ENCODE measurements at regions of chr3 and their contacts with region 1.

Region 1: GRCh38 chr3:16247276-16248061 is 17.3 kb downstream of the DPH3 start:
- DNase-seq: peak in 4 of 5 donors; percentile 84 to 92 (median 88)
- H3K4me3 ChIP-seq: no peak overlapping the region
- H3K27ac ChIP-seq: no peak overlapping the region
- H3K4me1 ChIP-seq: peaks cover 0 to 4% (median 0%) of the 10 kb centered on the region in 3 donors
- H3K27me3 ChIP-seq: no peaks in the 10 kb centered on the region
- CTCF ChIP-seq: peak; percentile 96

Region 2: GRCh38 chr3:15815696-15816095 is 431.8 kb before region 1 on chr3:
- intact Hi-C with region 1: loop called (anchors 10 kb)
- DNase-seq: peak in 2 of 5 donors; percentile 69 to 81
- H3K4me3 ChIP-seq: no peak overlapping the region
- H3K27ac ChIP-seq: no peak overlapping the region
- H3K4me1 ChIP-seq: no peaks in the 10 kb centered on the region
- H3K27me3 ChIP-seq: no peaks in the 10 kb centered on the region
- CTCF ChIP-seq: peak; percentile 56

Region 3: DNA sequence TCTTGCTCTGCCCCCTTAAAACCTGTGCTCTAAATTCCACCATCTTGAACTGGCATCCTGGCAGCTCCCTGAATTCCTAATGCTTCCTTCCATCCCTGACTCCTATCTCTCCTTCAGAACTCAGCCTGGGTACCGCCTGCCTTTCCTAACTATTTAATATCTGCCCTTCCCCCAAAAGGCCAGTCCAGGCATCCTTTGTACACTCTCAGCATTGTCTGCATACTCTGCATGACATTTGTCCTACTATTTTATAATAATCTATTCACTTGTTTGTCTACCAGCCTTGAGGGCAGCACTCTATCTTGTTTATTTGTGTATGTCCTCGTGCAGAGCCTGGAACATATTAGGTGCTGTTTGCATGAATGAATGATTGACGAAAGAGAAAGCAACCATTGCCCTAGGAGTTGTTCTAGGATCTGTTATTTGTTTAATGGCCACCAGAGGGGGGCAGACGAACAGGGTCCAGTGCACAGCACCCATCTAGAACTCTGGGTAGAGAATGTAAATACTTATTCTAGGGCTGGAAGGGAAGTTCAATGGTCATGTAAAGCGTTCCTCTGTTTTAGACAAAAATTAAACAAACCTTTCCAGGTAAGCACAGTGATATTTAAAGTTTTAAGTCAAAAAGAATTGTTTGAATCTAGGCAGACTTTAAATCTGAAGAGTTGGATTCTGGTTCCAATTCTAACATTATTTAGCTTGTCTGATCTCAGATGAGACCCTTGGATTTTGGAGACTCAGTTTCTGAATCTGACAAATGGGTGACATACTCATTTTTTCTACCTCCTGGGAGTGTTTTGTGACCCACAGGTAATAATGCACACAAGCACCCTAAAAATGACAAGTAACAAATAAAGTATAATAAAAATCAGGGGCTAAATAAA is 198.8 kb before region 1 on chr3:
- intact Hi-C with region 1: loop called (anchors 10 kb)
- DNase-seq: peak in 3 of 5 donors; percentile 33 to 82 (median 60)
- H3K4me3 ChIP-seq: peak overlapping the region in 2 of 3 donors; percentile 42 to 59
- H3K27ac ChIP-seq: no peak overlapping the region
- H3K4me1 ChIP-seq: peaks cover 0 to 6% (median 0%) of the 10 kb centered on the region in 3 donors
- H3K27me3 ChIP-seq: no peaks in the 10 kb centered on the region
- CTCF ChIP-seq: peak; percentile 73

Measured in kidney (tissue), 22 donors.